ENCODE measurements at regions of chr4 and their contacts with region 1.

Region 1: DNA sequence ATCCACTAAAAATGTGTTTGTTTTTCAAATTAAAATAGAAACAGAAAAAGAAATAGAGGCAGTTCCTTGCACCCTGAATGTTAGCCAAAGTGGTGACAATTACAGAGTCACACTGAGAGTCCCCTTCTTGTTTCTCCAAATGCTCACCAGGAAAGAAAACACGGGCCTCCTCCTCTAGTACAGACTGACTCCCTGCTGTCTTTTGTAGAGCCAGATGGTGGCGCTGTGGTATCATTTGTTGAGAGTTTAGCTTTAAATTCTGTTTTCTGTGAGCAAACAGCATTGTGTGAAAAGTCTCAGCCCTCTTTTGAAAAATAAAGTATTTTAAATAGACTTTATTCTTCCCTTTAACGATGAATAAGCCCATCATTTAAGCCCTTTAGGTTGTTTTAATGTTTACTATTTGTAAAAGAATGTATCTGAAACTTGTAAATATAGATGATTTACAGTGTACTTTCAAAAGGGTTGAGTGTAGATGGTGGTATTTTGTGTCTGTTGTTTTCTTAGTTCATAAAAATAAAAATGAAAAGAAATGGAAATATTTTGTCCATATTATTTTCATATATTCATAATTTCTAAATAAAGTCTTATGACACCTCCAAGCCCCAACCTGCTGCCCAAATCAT is 36.9 kb upstream of the ATOH1 start:
- DNase-seq: no peak
- H3K4me3 ChIP-seq: no peak overlapping the region
- H3K4me3 Mint-ChIP-seq: no peak overlapping the region
- H3K27ac ChIP-seq: no peak overlapping the region
- H3K27ac Mint-ChIP-seq: no peak overlapping the region
- H3K4me1 ChIP-seq: no peaks in the 10 kb centered on the region
- H3K4me1 Mint-ChIP-seq: no peaks in the 10 kb centered on the region
- H3K27me3 ChIP-seq: no peaks in the 10 kb centered on the region
- H3K27me3 Mint-ChIP-seq: peaks cover 0 to 1% of the 10 kb centered on the region in 2 donors

Region 2: GRCh38 chr4:93132631-93133030 is 659.1 kb before region 1 on chr4:
- CTCF ChIA-PET with region 1: no interaction called
- POLR2A ChIA-PET with region 1: no interaction called
- intact Hi-C with region 1: no loop called
- DNase-seq: no peak
- H3K4me3 ChIP-seq: no peak overlapping the region
- H3K4me3 Mint-ChIP-seq: no peak overlapping the region
- H3K27ac ChIP-seq: no peak overlapping the region
- H3K27ac Mint-ChIP-seq: no peak overlapping the region
- H3K4me1 ChIP-seq: no peaks in the 10 kb centered on the region
- H3K4me1 Mint-ChIP-seq: no peaks in the 10 kb centered on the region
- H3K27me3 ChIP-seq: no peaks in the 10 kb centered on the region
- H3K27me3 Mint-ChIP-seq: no peaks in the 10 kb centered on the region

Region 3: GRCh38 chr4:93810340-93810992 is 18.8 kb after region 1 on chr4:
- CTCF ChIA-PET with region 1: no interaction called
- POLR2A ChIA-PET with region 1: no interaction called
- intact Hi-C with region 1: no loop called
- DNase-seq: no peak
- H3K4me3 ChIP-seq: no peak overlapping the region
- H3K4me3 Mint-ChIP-seq: no peak overlapping the region
- H3K27ac ChIP-seq: no peak overlapping the region
- H3K27ac Mint-ChIP-seq: no peak overlapping the region
- H3K4me1 ChIP-seq: no peaks in the 10 kb centered on the region
- H3K4me1 Mint-ChIP-seq: no peaks in the 10 kb centered on the region
- H3K27me3 ChIP-seq: no peaks in the 10 kb centered on the region
- H3K27me3 Mint-ChIP-seq: no peaks in the 10 kb centered on the region

Region 4: GRCh38 chr4:94256828-94257227 is 465.1 kb after region 1 on chr4:
- CTCF ChIA-PET with region 1: no interaction called
- POLR2A ChIA-PET with region 1: no interaction called
- intact Hi-C with region 1: loop called (anchors 5 kb)
- DNase-seq: no peak
- H3K4me3 ChIP-seq: no peak overlapping the region
- H3K4me3 Mint-ChIP-seq: no peak overlapping the region
- H3K27ac ChIP-seq: no peak overlapping the region
- H3K27ac Mint-ChIP-seq: peak overlapping the region in 1 of 7 donors; percentile 29
- H3K4me1 ChIP-seq: no peaks in the 10 kb centered on the region
- H3K4me1 Mint-ChIP-seq: peaks cover 0 to 4% (median 0%) of the 10 kb centered on the region in 4 donors
- H3K27me3 ChIP-seq: no peaks in the 10 kb centered on the region
- H3K27me3 Mint-ChIP-seq: no peaks in the 10 kb centered on the region